Mammary epithelial cell (primary cell): ENCODE measurements at regions of chr1 and their contacts with region 1.

Region 1: DNA sequence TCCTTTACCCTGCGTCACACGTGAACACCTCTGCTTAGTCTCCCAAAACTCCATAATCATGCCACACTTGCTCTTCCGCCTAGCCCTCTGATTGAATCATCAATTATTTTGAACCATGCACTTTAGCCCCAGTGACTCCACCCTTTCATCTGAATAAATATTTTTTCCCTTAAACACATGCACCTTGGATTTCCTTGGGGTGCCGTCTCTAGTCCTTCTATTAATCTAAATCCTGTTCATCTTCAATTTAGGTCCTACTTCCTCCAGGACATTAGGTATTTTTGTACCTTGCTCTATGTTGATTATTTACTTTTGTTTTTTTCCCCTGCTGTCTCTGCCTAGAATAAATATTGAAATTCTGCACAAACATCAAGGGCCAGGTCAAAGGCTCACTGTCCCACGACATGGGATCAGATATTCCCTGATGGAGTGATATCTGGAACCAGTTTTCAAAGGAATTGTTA is 9.8 kb upstream of the CYP2J2 start:
- DNase-seq: no peak
- H3K4me3 ChIP-seq: no peak overlapping the region
- H3K27ac ChIP-seq: no peak overlapping the region
- H3K4me1 ChIP-seq: no peaks in the 10 kb centered on the region
- H3K27me3 ChIP-seq: no peaks in the 10 kb centered on the region
- CTCF ChIP-seq: no peak

Region 2: GRCh38 chr1:59885160-59885832 is 51.1 kb before region 1 on chr1:
- CTCF ChIA-PET with region 1: no interaction called
- dilution Hi-C with region 1: no loop called
- in situ Hi-C with region 1: loop called in 1 of 2 experiments (anchors 5 kb)
- intact Hi-C with region 1: no loop called
- DNase-seq: no peak
- H3K4me3 ChIP-seq: no peak overlapping the region
- H3K27ac ChIP-seq: no peak overlapping the region
- H3K4me1 ChIP-seq: no peaks in the 10 kb centered on the region
- H3K27me3 ChIP-seq: no peaks in the 10 kb centered on the region
- CTCF ChIP-seq: no peak